ENCODE measurements at regions of chr6 and their contacts with region 1.

Region 1: GRCh38 chr6:43021270-43022047 is at the start of gene RRP36:
- DNase-seq: peak; percentile 47 to 72 (median 50)
- H3K4me3 ChIP-seq: peak within 1 kb of the TSS; percentile 84
- H3K4me3 Mint-ChIP-seq: peak within 1 kb of the TSS; percentile 94 to 100 (median 98)
- H3K27ac ChIP-seq: peak within 1 kb of the TSS; percentile 68
- H3K27ac Mint-ChIP-seq: peak within 1 kb of the TSS; percentile 79 to 98 (median 95)
- H3K4me1 ChIP-seq: peaks cover 41% of the 10 kb centered on the region
- H3K4me1 Mint-ChIP-seq: peaks cover 14 to 58% (median 31%) of the 10 kb centered on the region in 4 donors
- H3K27me3 ChIP-seq: no peaks in the 10 kb centered on the region
- H3K27me3 Mint-ChIP-seq: no peaks in the 10 kb centered on the region
- total RNA-seq, gene RRP36: 56.5 to 58.7 TPM

Region 2: DNA sequence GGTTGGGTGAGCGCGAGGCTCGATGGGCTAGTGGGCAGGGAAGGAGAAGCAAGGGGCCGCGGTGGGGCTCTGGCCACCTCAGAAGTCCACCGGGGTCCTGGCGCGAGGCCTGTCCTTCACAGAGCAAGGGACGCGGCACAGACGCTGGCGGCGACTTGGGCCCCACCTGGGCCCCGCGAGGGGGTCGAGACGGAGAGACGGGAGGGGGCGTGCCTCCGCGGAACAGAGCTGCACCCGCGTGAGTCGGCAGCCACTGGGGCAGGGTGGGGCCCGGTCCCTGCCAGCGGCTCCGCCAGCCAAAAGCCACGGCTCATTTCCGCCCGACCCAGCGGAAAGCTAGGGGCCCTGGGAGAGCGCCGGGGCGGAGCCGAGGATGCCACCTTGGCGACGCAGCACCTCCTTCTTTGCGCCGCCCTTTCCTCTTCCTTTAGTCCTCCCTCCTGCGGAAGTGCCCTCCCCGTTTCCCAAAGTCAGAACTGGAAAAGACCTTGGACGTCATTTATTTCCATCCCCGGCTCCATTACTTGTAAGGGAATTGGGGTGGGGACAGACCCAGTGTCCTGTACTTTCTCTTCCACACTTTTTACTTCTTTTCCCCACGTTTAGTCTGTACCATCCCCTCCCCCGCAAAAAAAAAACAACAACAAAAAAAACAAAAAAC is 32.2 kb after region 1 on chr6 and contains the start of gene CUL7:
- CTCF ChIA-PET with region 1: interaction called, 6 read pairs
- POLR2A ChIA-PET with region 1: interaction called, 40 read pairs
- intact Hi-C with region 1: no loop called
- DNase-seq: peak; percentile 86 to 92 (median 88)
- H3K4me3 ChIP-seq: peak within 1 kb of the TSS; percentile 81 to 88
- H3K4me3 Mint-ChIP-seq: peak within 1 kb of the TSS; percentile 92 to 97 (median 94)
- H3K27ac ChIP-seq: peak within 1 kb of the TSS; percentile 85
- H3K27ac Mint-ChIP-seq: peak within 1 kb of the TSS; percentile 94 to 98 (median 97)
- H3K4me1 ChIP-seq: peaks cover 41% of the 10 kb centered on the region
- H3K4me1 Mint-ChIP-seq: peaks cover 22 to 51% (median 44%) of the 10 kb centered on the region in 4 donors
- H3K27me3 ChIP-seq: no peaks in the 10 kb centered on the region
- H3K27me3 Mint-ChIP-seq: no peaks in the 10 kb centered on the region
- total RNA-seq, gene CUL7: 13.7 to 13.9 TPM

Region 3: GRCh38 chr6:43059168-43060033 is 37.9 kb after region 1 on chr6 and contains the starts of genes KLC4 and MRPL2:
- CTCF ChIA-PET with region 1: interaction called, 6 read pairs
- POLR2A ChIA-PET with region 1: interaction called, 40 read pairs
- intact Hi-C with region 1: loop called (anchors 1 kb)
- DNase-seq: peak; percentile 95 to 99 (median 96)
- H3K4me3 ChIP-seq: peak within 1 kb of the TSS; percentile 84 to 87
- H3K4me3 Mint-ChIP-seq: peak within 1 kb of the TSS; percentile 94 to 99 (median 97)
- H3K27ac ChIP-seq: peak within 1 kb of the TSS; percentile 91
- H3K27ac Mint-ChIP-seq: peak within 1 kb of the TSS; percentile 97 to 100 (median 99)
- H3K4me1 ChIP-seq: peaks cover 24% of the 10 kb centered on the region
- H3K4me1 Mint-ChIP-seq: peaks cover 27 to 52% (median 35%) of the 10 kb centered on the region in 4 donors
- H3K27me3 ChIP-seq: no peaks in the 10 kb centered on the region
- H3K27me3 Mint-ChIP-seq: no peaks in the 10 kb centered on the region
- total RNA-seq, gene KLC4: 51.6 to 57.0 TPM
- total RNA-seq, gene MRPL2: 55.3 to 56.5 TPM

Region 4: GRCh38 chr6:43541774-43542471 is 520.5 kb after region 1 on chr6:
- CTCF ChIA-PET with region 1: no interaction called
- POLR2A ChIA-PET with region 1: no interaction called
- intact Hi-C with region 1: no loop called
- DNase-seq: no peak
- H3K4me3 ChIP-seq: no peak overlapping the region
- H3K4me3 Mint-ChIP-seq: no peak overlapping the region
- H3K27ac ChIP-seq: no peak overlapping the region
- H3K27ac Mint-ChIP-seq: no peak overlapping the region
- H3K4me1 ChIP-seq: no peaks in the 10 kb centered on the region
- H3K4me1 Mint-ChIP-seq: peaks cover 0 to 3% (median 2%) of the 10 kb centered on the region in 4 donors
- H3K27me3 ChIP-seq: no peaks in the 10 kb centered on the region
- H3K27me3 Mint-ChIP-seq: no peaks in the 10 kb centered on the region

Measured in CD4-positive, alpha-beta memory T cell (primary cell).